ENCODE measurements at regions of chrX and their contacts with region 1.

Region 1: GRCh38 chrX:10681167-10681566 is 60.8 kb upstream of the MID1 start:
- DNase-seq: no peak

Region 2: GRCh38 chrX:11215191-11215921 is 534.2 kb after region 1 on chrX:
- intact Hi-C with region 1: loop called in 1 of 2 experiments (anchors 5 kb)
- DNase-seq: peak; percentile 62

Measured in posterior vena cava (tissue), 2 donors.